ENCODE measurements at regions of chr20 and their contacts with region 1.

Region 1: DNA sequence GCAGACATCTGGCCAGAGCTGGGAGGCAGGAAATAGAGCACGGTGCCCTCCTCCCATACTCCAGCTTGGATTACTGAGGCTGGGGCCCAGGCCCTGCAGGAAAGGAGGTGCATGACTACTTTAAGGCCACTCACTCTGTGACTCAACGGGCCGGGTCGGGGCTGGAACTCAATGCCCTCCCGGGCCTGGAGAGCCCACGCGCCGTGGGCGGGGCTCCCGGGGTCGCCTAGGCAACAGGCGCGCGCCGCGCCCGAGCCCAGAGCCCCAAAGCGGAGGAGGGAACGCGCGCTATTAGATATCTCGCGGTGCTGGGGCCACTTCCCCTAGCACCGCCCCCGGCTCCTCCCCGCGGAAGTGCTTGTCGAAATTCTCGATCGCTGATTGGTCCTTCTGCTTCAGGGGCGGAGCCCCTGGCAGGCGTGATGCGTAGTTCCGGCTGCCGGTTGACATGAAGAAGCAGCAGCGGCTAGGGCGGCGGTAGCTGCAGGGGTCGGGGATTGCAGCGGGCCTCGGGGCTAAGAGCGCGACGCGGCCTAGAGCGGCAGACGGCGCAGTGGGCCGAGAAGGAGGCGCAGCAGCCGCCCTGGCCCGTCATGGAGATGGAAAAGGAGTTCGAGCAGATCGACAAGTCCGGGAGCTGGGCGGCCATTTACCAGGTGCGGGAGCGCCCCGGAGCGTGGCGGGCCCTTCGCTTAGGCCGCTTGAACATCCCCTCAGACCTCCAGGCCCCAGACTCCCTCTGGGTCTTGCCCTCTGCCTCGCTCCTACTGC is at the start of gene PTPN1:
- DNase-seq: peak; percentile 97 to 99
- H3K4me3 ChIP-seq: peak within 1 kb of the TSS; percentile 75
- H3K27ac ChIP-seq: peak within 1 kb of the TSS; percentile 35
- H3K4me1 ChIP-seq: peaks cover 41% of the 10 kb centered on the region
- H3K27me3 ChIP-seq: no peaks in the 10 kb centered on the region
- CTCF ChIP-seq: 0 out of 2 replicates have a peak, but pooled peaks have one; percentile 11
- total RNA-seq, gene PTPN1: 46.3 and 59.8 TPM in 2 replicates

Region 2: DNA sequence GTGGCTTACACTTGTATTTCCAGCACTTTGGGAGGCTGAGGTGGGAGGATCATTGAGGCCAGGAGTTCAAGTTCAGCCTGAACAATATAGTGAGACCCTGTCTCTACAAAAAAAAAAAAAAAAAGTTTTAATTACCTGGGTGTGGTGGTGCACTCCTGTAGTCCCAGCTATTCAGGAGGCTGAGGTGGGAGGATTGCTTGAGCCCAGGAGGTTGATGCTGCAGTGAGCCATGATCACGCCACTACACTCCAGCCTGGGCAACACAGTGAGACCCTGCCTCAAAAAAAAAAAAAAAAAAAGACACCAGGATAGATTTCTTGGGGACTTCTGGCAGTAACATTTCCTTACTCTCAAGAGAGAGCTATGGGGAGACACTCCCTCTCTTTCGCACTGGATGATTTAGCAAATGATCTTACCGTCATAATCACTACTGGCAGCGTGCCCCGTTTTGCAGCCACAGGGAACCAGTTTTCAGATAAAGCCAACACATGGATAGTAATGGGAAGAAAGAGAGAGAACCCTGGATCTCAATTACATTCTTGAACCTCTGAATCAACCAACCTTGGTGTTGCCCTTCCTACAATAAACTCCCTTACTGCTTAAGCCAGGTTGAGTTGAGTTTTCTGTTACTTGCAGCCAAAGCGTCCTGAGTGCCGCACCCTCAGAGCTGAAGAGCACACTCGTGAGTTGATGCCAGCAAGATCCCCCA is 18.0 kb before region 1 on chr20:
- CTCF ChIA-PET with region 1: no interaction called
- POLR2A ChIA-PET with region 1: interaction called, 10 read pairs
- intact Hi-C with region 1: no loop called
- DNase-seq: peak; percentile 36 to 58
- H3K4me3 ChIP-seq: no peak overlapping the region
- H3K27ac ChIP-seq: peak overlapping the region; percentile 88
- H3K4me1 ChIP-seq: peaks cover 29% of the 10 kb centered on the region
- H3K27me3 ChIP-seq: no peaks in the 10 kb centered on the region
- CTCF ChIP-seq: no peak

Region 3: GRCh38 chr20:50569864-50570836 is 60.0 kb after region 1 on chr20:
- CTCF ChIA-PET with region 1: interaction called, 12 read pairs
- POLR2A ChIA-PET with region 1: interaction called, 8 read pairs
- intact Hi-C with region 1: loop called (anchors 2 kb)
- DNase-seq: peak in 1 of 2 experiments; percentile 20
- H3K4me3 ChIP-seq: no peak overlapping the region
- H3K27ac ChIP-seq: no peak overlapping the region
- H3K4me1 ChIP-seq: no peaks in the 10 kb centered on the region
- H3K27me3 ChIP-seq: no peaks in the 10 kb centered on the region
- CTCF ChIP-seq: peak; percentile 41; the same call in 1 of the 2 replicates

Region 4: DNA sequence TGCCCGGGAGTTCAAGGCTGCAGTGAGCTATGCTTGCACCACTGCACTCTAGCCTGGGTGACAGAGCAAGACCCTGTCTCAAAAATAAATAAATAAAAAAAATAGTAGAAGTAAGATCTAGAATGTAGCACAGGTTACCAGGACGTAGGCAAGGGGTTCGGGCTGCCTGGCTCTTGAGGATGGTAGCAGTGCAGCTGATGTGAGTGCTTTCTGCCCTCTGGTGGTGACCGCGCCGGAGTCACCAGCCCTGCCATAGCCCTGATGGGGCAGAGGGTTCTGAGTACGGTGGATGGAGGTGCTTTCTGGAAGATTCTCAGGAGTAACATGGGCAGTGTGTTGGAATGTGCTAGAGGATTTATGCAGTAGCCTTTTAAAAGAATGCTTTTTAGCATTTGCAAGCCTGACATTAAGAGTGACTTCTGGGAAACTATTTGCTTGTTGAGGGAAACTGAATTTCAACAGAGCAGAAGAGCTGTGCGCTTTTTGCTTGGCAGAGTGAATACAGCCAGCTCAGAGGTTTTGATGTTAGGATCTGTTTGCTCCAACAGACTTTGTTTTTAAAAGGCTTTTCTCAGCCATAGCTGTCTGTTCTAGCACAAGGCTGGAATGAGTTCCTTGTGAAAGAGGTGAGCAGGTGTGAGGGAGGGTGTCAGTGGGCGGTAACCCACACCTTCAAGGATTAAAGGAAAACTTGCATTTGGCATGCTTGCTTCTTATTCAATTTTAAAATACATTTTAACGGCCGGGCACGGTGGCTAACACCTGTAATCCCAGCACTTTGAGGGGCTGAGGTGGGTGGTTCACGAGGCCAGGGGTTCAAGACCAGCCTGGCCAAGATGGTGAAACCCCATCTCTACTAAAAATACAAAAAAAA is 66.0 kb after region 1 on chr20:
- CTCF ChIA-PET with region 1: interaction called, 12 read pairs
- POLR2A ChIA-PET with region 1: interaction called, 8 read pairs
- intact Hi-C with region 1: no loop called
- DNase-seq: peak in 1 of 2 experiments; percentile 60
- H3K4me3 ChIP-seq: no peak overlapping the region
- H3K27ac ChIP-seq: no peak overlapping the region
- H3K4me1 ChIP-seq: no peaks in the 10 kb centered on the region
- H3K27me3 ChIP-seq: no peaks in the 10 kb centered on the region
- CTCF ChIP-seq: peak; percentile 81